ENCODE measurements at regions of chr9 and their contacts with region 1.

Region 1: GRCh38 chr9:35569206-35569605 is 35.9 kb upstream of the TESK1 start:
- DNase-seq: no peak
- ATAC-seq: no peak
- H3K4me3 Mint-ChIP-seq: no peak overlapping the region
- H3K27ac Mint-ChIP-seq: peak overlapping the region; percentile 29
- H3K4me1 Mint-ChIP-seq: peaks cover 40% of the 10 kb centered on the region
- H3K27me3 Mint-ChIP-seq: no peaks in the 10 kb centered on the region

Region 2: GRCh38 chr9:35553670-35554543 is 15.3 kb before region 1 on chr9:
- CTCF ChIA-PET with region 1: interaction called, 24 read pairs
- DNase-seq: peak; percentile 59
- ATAC-seq: peak; percentile 66
- H3K4me3 Mint-ChIP-seq: no peak overlapping the region
- H3K27ac Mint-ChIP-seq: no peak overlapping the region
- H3K4me1 Mint-ChIP-seq: no peaks in the 10 kb centered on the region
- H3K27me3 Mint-ChIP-seq: peaks cover 10% of the 10 kb centered on the region

Measured in activated CD8-positive, alpha-beta memory T cell treated with anti-CD3 and anti-CD28 coated beads, Interleukin-2, amount 10 ng/mL, durations not matched to agents 7 days and 5 days (primary cell).